PC-3 (cell line): ENCODE measurements at regions of chr3 and their contacts with region 1.

Region 1: GRCh38 chr3:69084326-69085167 is at the start of gene ARL6IP5:
- DNase-seq: peak; percentile 74
- ATAC-seq: peak; percentile 43
- H3K4me3 ChIP-seq: peak within 1 kb of the TSS; percentile 85
- H3K27ac ChIP-seq: peak within 1 kb of the TSS; percentile 99
- H3K4me1 ChIP-seq: peaks cover 37% of the 10 kb centered on the region
- H3K27me3 ChIP-seq: no peaks in the 10 kb centered on the region
- CTCF ChIP-seq: no peak
- total RNA-seq, gene ARL6IP5: 18.8 and 25.4 TPM in 2 replicates

Region 2: GRCh38 chr3:68620211-68620610 is 464.3 kb before region 1 on chr3:
- CTCF ChIA-PET with region 1: no interaction called
- POLR2A ChIA-PET with region 1: no interaction called
- intact Hi-C with region 1: no loop called
- DNase-seq: no peak
- ATAC-seq: no peak
- H3K4me3 ChIP-seq: no peak overlapping the region
- H3K27ac ChIP-seq: no peak overlapping the region
- H3K4me1 ChIP-seq: no peaks in the 10 kb centered on the region
- H3K27me3 ChIP-seq: no peaks in the 10 kb centered on the region
- CTCF ChIP-seq: no peak

Region 3: DNA sequence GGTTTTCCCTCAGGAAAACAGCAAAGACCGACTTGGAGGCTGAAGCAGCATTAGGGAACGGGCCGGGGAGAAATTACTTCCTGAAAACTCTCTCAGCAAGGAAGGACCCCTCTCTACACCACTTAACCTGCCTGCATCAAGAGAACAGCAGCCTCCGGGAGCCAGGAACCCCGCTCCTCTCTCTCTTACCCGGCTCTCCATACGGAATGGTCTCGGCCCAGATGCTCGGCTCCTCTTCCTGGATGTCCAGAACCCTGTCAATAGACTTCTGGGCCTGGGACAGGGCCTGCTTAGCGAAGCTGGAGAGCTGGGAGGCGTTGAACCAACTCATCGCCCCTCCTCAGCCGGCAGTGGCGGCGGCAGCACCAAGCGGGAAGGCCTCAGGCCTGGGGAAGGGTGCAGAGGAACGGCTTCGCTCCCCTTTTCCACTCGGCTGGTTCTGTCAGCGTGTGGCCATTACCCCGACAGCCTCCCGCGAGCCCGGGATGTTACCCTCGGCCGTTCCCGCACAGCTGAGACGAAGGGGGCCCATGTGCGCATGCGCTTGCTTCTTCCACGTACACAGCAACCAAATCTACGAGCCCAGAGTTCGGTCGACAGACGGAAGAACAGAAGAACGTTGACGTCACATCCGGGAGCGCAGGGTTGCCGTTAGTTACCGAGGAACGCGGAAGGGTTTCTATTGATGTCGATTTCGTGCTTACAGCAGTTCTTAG is 32.6 kb before region 1 on chr3 and contains the start of gene TMF1:
- CTCF ChIA-PET with region 1: no interaction called
- POLR2A ChIA-PET with region 1: interaction called, 6 read pairs
- intact Hi-C with region 1: loop called (anchors 5 kb)
- DNase-seq: peak; percentile 93
- ATAC-seq: peak; percentile 86
- H3K4me3 ChIP-seq: peak within 1 kb of the TSS; percentile 89
- H3K27ac ChIP-seq: peak within 1 kb of the TSS; percentile 62
- H3K4me1 ChIP-seq: 0 out of 2 replicates have a peak, but pooled peaks cover 5% of the 10 kb centered on the region
- H3K27me3 ChIP-seq: no peaks in the 10 kb centered on the region
- CTCF ChIP-seq: no peak
- total RNA-seq, gene TMF1: 6.4 and 7.2 TPM in 2 replicates

Region 4: GRCh38 chr3:69120879-69121464 is 36.4 kb after region 1 on chr3:
- CTCF ChIA-PET with region 1: no interaction called
- POLR2A ChIA-PET with region 1: no interaction called
- intact Hi-C with region 1: loop called (anchors 2 kb)
- DNase-seq: peak; percentile 77
- ATAC-seq: peak; percentile 79
- H3K4me3 ChIP-seq: no peak overlapping the region
- H3K27ac ChIP-seq: no peak overlapping the region
- H3K4me1 ChIP-seq: peaks cover 11% of the 10 kb centered on the region
- H3K27me3 ChIP-seq: no peaks in the 10 kb centered on the region
- CTCF ChIP-seq: peak; percentile 73

Region 5: DNA sequence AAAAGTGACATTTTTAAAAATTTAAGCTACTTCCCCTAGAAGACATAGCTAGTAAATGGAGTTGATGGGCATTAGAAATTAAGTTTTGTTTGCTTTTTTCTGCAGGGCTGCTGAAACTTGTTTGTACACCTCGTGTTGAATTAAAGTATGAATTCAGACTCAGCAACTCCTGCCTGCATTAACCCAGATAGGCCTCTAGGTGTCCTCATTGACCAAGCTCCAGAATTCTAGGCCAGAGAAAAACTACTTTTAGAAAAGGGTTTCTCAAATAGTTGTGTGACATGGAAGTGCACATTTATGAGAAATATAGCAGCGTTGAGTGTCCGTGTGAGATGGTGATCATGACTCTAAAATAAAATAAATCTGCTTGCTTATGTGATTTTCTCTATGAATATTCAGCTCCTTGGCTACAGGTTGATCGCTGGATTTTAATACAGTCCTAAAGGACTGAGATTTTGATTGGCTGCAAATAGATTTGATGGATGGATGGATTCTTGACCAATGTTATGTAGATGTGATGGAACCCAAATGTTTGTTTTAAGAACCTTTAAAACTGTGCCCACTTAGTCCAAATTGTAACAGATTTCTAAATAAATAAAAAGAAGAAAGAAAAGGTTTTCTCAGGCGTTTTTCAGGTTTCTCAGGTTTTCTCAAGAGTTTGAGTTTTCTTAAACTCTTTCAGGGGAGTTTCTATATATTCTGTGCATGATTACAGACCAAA is 77.2 kb after region 1 on chr3:
- CTCF ChIA-PET with region 1: interaction called, 11 read pairs
- POLR2A ChIA-PET with region 1: no interaction called
- intact Hi-C with region 1: no loop called
- DNase-seq: peak; percentile 52
- ATAC-seq: peak; percentile 20; the same call in 1 of the 2 replicates
- H3K4me3 ChIP-seq: no peak overlapping the region
- H3K27ac ChIP-seq: no peak overlapping the region
- H3K4me1 ChIP-seq: no peaks in the 10 kb centered on the region
- H3K27me3 ChIP-seq: no peaks in the 10 kb centered on the region
- CTCF ChIP-seq: peak; percentile 80